BJ (cell line): ENCODE measurements at regions of chr3 and their contacts with region 1.

Region 1: GRCh38 chr3:184561061-184561912 is at the start of gene EPHB3:
- DNase-seq: peak; percentile 95
- H3K4me3 ChIP-seq: peak within 1 kb of the TSS; percentile 71
- H3K27me3 ChIP-seq: peaks cover 11% of the 10 kb centered on the region
- CTCF ChIP-seq: peak; percentile 99
- polyA plus RNA-seq, gene EPHB3: 1.1 and 3.3 TPM in 2 replicates

Region 2: GRCh38 chr3:184602416-184603150 is 41.3 kb after region 1 on chr3:
- CTCF ChIA-PET with region 1: interaction called, 10 read pairs
- POLR2A ChIA-PET with region 1: no interaction called
- DNase-seq: no peak
- H3K4me3 ChIP-seq: no peak overlapping the region
- H3K27me3 ChIP-seq: peaks cover 29% of the 10 kb centered on the region
- CTCF ChIP-seq: no peak

Region 3: GRCh38 chr3:184618811-184619210 is 57.5 kb after region 1 on chr3:
- CTCF ChIA-PET with region 1: no interaction called
- POLR2A ChIA-PET with region 1: no interaction called
- DNase-seq: no peak
- H3K4me3 ChIP-seq: no peak overlapping the region
- H3K27me3 ChIP-seq: peaks cover 7% of the 10 kb centered on the region
- CTCF ChIP-seq: no peak

Region 4: DNA sequence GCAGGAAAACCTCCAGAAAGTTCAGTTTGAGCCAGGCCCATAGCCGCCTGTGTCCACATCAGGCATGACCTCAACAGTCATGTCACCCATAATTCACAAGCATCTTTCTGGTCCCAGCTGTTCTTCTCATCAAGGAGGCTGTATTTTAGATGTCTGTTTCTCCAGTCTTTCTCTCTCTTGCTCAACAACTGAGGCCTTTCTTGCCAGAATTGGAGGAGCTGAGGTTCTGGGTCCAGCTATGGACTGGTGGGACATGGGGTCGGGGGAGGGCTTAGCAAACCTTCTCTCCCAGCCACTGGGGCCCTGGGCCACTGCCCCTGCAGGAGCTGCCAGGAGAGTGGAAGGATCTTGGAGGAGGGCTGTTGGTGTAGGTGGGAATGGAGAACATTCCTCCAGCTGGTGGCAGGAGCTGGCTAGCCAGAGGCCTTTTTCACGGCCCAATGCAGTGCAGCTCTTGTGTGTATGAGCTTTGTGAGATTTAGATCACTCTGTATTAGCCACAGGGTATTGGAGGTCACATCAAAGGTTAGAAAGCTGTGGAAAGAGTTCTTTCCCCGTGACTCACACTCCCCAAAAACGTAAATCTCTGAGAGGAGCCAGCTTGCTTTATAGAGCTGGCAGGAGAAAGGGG is 127.1 kb after region 1 on chr3:
- CTCF ChIA-PET with region 1: interaction called, 20 read pairs
- POLR2A ChIA-PET with region 1: no interaction called
- DNase-seq: peak; percentile 78
- H3K4me3 ChIP-seq: no peak overlapping the region
- H3K27me3 ChIP-seq: peaks cover 15% of the 10 kb centered on the region
- CTCF ChIP-seq: peak; percentile 25; the same call in 1 of the 2 replicates

Region 5: GRCh38 chr3:184740524-184741484 is 179.5 kb after region 1 on chr3:
- CTCF ChIA-PET with region 1: no interaction called
- POLR2A ChIA-PET with region 1: interaction called, 10 read pairs
- DNase-seq: no peak
- H3K4me3 ChIP-seq: no peak overlapping the region
- H3K27me3 ChIP-seq: no peaks in the 10 kb centered on the region; the same call in 1 of the 2 replicates
- CTCF ChIP-seq: no peak

Region 6: GRCh38 chr3:184748219-184749135 is 187.2 kb after region 1 on chr3:
- CTCF ChIA-PET with region 1: interaction called, 11 read pairs
- POLR2A ChIA-PET with region 1: no interaction called
- DNase-seq: no peak
- H3K4me3 ChIP-seq: no peak overlapping the region
- H3K27me3 ChIP-seq: no peaks in the 10 kb centered on the region; the same call in none of the 2 replicates
- CTCF ChIP-seq: peak; percentile 25

Region 7: DNA sequence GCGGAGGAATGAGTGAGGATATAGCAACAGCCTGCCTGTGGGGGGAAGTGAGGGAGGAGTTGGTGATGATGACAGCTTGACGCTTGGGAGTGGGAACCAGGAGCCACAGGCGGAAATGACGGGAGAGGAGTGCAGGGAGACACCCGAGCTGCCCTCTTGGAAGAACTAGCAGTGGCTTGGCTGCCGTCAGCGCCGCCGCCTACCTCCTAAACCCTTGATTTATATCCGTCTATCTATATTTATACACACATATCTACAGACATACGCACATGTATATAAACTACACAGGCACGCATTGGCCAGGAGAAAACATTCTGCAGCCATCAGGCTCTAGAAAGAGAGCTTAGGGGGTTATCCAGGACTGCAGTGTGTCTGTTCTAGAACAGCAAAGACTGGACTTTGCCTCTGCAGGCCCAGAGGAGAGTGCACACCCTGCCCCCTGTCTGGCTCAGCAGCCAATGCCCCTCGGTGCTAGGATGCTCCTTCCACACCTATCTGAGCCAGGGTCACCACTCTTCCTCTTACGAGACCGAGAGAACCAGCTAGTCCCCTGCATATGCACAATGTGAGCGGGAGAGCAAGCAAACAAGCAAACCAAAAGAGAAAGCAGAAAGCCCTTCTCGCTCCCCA is 195.8 kb after region 1 on chr3:
- CTCF ChIA-PET with region 1: interaction called, 28 read pairs
- POLR2A ChIA-PET with region 1: interaction called, 3 read pairs
- DNase-seq: no peak
- H3K4me3 ChIP-seq: no peak overlapping the region
- H3K27me3 ChIP-seq: peaks cover 1% of the 10 kb centered on the region
- CTCF ChIP-seq: no peak